Activated B cell treated with CpG ODN at 0.5 μM for 24 hours (primary cell): ENCODE measurements at regions of chr15 and their contacts with region 1.

Region 1: DNA sequence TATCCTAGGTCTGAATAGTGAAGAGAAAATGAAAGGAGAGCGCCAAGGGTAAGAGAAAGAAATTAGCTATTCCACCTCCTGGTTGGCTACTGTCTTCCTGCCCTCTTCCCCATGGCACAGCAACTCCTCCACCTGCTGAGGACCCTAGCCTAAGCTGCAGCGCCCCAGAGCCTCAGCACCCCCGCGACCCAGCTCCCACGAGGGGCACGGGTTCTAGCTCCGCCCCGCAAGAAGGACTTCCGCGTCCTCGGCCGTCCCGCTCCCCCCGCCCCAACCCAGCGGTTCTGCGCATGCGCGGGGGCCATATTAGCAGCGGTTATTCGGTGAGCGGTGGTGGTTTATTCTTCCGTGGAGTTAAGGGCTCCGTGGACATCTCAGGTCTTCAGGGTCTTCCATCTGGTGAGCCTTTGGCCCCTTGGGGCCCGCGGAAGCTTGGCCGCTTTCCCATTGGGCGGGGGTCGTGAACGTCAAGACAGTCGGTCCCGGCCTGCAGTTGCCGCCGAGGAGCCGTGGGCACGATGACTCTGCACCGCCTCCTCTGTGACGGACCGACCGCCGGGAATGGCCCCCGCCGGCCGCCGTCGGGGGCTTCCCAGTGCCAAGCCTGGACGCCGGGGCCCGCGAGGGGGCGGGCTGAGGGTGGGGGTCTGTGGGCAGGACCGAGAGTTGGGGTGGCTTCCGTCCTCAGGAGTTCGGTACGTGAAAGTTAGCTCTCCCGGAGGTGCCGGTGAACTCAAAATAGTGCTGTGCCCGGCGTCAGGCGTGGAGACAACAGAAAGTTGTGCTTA is at the start of gene PSMA4:
- DNase-seq: peak; percentile 97
- ATAC-seq: peak; percentile 87
- H3K4me3 Mint-ChIP-seq: peak within 1 kb of the TSS; percentile 98
- H3K27ac Mint-ChIP-seq: peak within 1 kb of the TSS; percentile 99
- H3K4me1 Mint-ChIP-seq: peaks cover 24% of the 10 kb centered on the region
- H3K27me3 Mint-ChIP-seq: no peaks in the 10 kb centered on the region
- CTCF ChIP-seq: no peak
- total RNA-seq, gene PSMA4: 178 and 182 TPM in 2 replicates

Region 2: DNA sequence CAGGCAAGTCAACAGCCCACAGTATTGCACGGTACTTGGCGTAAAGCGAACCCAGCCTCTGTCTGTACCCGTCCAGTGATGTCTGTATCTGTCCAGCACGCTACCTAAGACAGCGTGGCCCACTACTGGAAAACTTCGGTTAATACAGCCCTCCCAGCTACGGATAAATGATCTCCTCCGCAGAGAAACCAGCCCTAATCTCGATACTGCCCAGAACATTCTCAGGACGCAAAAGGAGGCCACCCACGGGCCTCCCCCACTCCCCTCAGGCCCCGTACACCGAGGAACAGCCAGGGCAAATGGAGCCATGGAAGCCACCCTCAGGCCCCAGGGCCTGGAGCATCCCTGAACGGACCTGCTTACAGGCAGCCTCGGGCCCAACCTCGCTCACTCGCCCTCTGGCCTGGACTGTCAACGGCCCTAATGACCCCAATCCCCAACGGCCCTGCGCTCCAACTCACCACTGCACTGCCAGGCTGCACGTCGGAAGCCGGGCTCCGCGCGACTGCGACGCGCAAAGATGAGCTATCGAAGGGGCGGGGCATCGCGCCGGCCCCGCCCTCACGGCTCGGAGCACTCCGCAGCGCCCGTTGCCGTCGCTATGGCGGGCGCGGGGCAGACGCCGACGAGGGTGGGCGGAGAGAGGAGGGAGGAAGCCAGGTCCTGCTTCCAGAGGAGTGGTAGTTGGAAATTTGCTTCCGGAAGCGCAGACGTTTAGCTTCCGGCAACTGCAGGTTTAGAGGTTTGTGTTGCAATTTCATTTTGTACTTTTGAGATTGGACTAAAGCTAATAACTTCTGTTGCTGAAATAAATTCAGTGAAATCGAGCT is 241.0 kb before region 1 on chr15 and contains the start of gene SKIC8:
- CTCF ChIA-PET with region 1: no interaction called
- POLR2A ChIA-PET with region 1: interaction called, 11 read pairs
- intact Hi-C with region 1: no loop called
- DNase-seq: peak; percentile 89
- ATAC-seq: peak; percentile 97
- H3K4me3 Mint-ChIP-seq: peak within 1 kb of the TSS; percentile 98
- H3K27ac Mint-ChIP-seq: peak within 1 kb of the TSS; percentile 87
- H3K4me1 Mint-ChIP-seq: peaks cover 23% of the 10 kb centered on the region
- H3K27me3 Mint-ChIP-seq: no peaks in the 10 kb centered on the region
- CTCF ChIP-seq: no peak
- total RNA-seq, gene SKIC8: 43.2 and 46.0 TPM in 2 replicates

Region 3: GRCh38 chr15:78448441-78449219 is 91.7 kb before region 1 on chr15:
- CTCF ChIA-PET with region 1: no interaction called
- POLR2A ChIA-PET with region 1: no interaction called
- intact Hi-C with region 1: no loop called
- DNase-seq: no peak
- ATAC-seq: no peak
- H3K4me3 Mint-ChIP-seq: no peak overlapping the region
- H3K27ac Mint-ChIP-seq: no peak overlapping the region
- H3K4me1 Mint-ChIP-seq: peaks cover 40% of the 10 kb centered on the region
- H3K27me3 Mint-ChIP-seq: no peaks in the 10 kb centered on the region
- CTCF ChIP-seq: no peak

Region 4: DNA sequence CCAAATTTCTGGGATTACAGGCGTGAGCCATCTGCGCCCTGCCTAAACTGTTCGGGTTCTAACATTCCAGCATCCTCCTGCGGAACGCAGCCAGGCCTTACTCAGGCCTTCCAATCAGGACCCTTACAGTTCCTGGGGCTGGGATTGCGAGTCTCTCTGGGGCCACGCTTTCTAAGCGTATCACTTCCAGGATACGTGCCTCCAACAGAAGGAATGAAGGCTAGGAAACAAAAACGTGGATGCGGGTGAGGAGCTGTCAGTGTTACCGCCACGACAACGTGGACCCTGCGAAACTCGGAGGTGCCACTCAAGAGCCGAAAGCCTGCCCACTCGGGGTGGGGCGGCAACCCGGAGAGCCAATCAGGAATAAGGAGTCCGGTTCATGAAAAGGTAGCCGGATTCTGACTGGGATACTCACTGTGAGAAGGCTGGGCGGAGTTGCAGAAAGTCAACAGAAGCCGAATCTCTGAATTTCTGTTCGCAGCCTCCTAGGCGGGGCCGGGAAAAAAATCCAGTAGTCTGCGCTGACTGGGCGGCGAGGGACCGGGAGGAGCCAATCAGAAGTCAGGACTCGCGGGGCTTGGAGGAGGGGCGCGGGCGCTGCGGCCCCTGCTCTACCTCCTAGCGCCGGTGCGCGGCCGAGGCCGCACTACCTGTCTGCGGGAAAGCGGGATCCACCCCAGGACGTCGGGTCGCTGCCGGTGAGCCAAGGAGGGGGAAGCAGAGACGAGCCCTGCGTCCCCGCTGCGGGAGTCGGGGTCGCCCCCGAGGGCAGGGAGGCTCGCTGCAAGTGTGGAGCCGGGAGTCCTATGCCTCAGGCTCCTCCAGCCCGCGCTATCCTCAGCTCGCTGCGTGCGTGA is 33.1 kb before region 1 on chr15 and contains the start of gene HYKK:
- CTCF ChIA-PET with region 1: no interaction called
- POLR2A ChIA-PET with region 1: interaction called, 6 read pairs
- intact Hi-C with region 1: loop called (anchors 2 kb)
- DNase-seq: peak; percentile 53
- ATAC-seq: peak; percentile 87
- H3K4me3 Mint-ChIP-seq: peak within 1 kb of the TSS; percentile 91
- H3K27ac Mint-ChIP-seq: no peak within 1 kb of the TSS
- H3K4me1 Mint-ChIP-seq: peaks cover 11% of the 10 kb centered on the region
- H3K27me3 Mint-ChIP-seq: peaks cover 13% of the 10 kb centered on the region
- CTCF ChIP-seq: no peak
- total RNA-seq, gene HYKK: 0.10 and 0.53 TPM in 2 replicates

Region 5: GRCh38 chr15:78565097-78565951 is 25.0 kb after region 1 on chr15 and contains the start of gene CHRNA5:
- CTCF ChIA-PET with region 1: interaction called, 6 read pairs
- POLR2A ChIA-PET with region 1: interaction called, 57 read pairs
- intact Hi-C with region 1: loop called (anchors 1 kb)
- DNase-seq: peak; percentile 80
- ATAC-seq: peak; percentile 93
- H3K4me3 Mint-ChIP-seq: peak within 1 kb of the TSS; percentile 86
- H3K27ac Mint-ChIP-seq: peak within 1 kb of the TSS; percentile 67
- H3K4me1 Mint-ChIP-seq: peaks cover 21% of the 10 kb centered on the region
- H3K27me3 Mint-ChIP-seq: peaks cover 3% of the 10 kb centered on the region
- CTCF ChIP-seq: no peak
- total RNA-seq, gene CHRNA5: 1.3 TPM in 2 replicates